Activated CD4-positive, alpha-beta memory T cell treated with anti-CD3 and anti-CD28 coated beads for 36 hours (primary cell): ENCODE measurements at regions of chr1 and their contacts with region 1.

Region 1: DNA sequence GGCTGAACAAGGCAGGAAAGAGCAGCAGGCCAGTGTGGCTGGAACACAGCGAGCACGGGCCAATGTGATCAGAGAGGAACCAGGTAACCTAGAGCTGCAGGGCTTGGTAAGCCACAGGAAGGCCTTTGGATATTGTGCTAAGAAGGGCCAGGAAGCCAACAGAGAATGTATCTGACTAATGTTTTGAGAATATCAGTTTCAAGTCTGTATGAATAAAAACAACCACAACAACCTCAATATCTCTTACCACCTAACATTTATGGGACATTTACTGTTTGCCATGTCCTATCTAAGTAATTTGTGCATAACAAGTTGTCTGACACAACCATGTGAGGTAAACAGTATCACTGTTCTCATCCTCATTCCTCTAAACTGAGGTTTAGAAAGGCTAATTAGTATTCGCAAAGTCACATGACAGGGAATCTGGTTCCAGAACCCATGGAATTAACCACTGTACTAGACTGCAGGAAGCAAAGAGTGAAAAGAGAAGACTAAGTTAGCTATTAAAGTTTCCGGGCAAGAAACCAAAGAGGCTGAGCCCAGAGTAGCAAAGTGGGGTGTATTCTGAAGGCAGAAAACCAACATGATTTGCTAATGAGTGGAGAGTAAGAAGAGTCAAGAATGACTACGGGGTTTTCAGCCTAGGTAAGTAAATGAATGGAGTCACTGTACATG is 38.9 kb downstream of the SPRTN start:
- DNase-seq: peak; percentile 48
- H3K4me3 Mint-ChIP-seq: no peak overlapping the region
- H3K27ac Mint-ChIP-seq: peak overlapping the region; percentile 33
- H3K4me1 Mint-ChIP-seq: peaks cover 32% of the 10 kb centered on the region
- H3K27me3 Mint-ChIP-seq: no peaks in the 10 kb centered on the region

Region 2: DNA sequence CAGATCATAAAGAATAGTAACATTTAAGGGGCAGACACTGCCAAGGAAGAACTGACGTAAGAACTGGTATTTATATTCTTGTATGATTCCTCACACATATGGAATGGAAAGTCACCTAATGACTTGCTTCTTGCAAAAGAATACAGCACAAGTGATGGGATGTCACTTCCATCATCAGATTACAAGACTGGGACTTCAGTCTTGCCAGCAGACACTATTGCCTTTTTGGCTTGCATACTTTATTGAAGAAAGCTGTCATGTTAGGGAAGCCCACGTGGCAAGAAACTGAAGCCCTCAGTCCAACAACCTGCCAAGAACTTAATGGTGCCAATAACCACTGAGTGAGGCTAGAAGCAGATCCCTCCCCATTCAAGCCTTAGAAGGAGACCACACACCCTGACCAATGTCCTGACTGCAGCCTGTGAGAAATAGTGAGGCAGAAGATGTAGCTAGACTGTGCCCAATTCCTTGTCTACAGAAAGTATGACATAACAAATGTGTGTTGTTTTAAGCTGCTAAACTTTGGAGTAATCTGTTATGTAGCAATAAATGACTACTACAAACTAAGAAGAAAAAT is 33.1 kb after region 1 on chr1:
- CTCF ChIA-PET with region 1: no interaction called
- POLR2A ChIA-PET with region 1: no interaction called
- intact Hi-C with region 1: loop called (anchors 2 kb)
- DNase-seq: no peak
- H3K4me3 Mint-ChIP-seq: no peak overlapping the region
- H3K27ac Mint-ChIP-seq: no peak overlapping the region
- H3K4me1 Mint-ChIP-seq: peaks cover 38% of the 10 kb centered on the region
- H3K27me3 Mint-ChIP-seq: no peaks in the 10 kb centered on the region